ENCODE measurements at regions of chr5 and their contacts with region 1.

Region 1: GRCh38 chr5:141040771-141041426 is 10.3 kb upstream of the PCDHB1 start:
- DNase-seq: peak; percentile 85
- H3K4me3 ChIP-seq: no peak overlapping the region
- H3K27ac ChIP-seq: no peak overlapping the region
- H3K4me1 ChIP-seq: no peaks in the 10 kb centered on the region
- H3K27me3 ChIP-seq: no peaks in the 10 kb centered on the region
- CTCF ChIP-seq: peak; percentile 57
- POLR2A ChIP-seq: no peak

Region 2: DNA sequence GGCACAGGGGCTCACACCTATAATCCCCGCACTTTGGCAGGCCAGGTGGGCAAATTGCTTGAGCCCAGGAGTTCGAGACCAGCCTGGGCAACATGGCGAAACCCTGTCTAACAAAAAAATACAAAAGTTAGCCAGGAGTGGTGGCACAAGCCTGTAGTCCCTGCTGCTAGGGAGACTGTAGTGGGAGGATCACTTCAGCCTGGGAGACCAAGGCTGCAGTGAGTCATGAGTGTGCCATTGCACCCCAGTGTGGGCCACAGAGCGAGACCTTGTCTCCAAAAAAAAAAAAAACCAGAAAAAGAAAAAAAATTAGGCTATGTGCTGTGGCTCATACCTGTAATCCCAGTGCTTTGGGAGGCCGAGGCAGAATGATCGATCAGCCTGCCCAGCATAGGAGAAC is 552.0 kb before region 1 on chr5:
- CTCF ChIA-PET with region 1: no interaction called
- POLR2A ChIA-PET with region 1: no interaction called
- dilution Hi-C with region 1: no loop called
- intact Hi-C with region 1: no loop called
- DNase-seq: no peak
- H3K4me3 ChIP-seq: no peak overlapping the region
- H3K27ac ChIP-seq: no peak overlapping the region
- H3K4me1 ChIP-seq: no peaks in the 10 kb centered on the region
- H3K27me3 ChIP-seq: no peaks in the 10 kb centered on the region
- CTCF ChIP-seq: no peak
- POLR2A ChIP-seq: no peak

Region 3: DNA sequence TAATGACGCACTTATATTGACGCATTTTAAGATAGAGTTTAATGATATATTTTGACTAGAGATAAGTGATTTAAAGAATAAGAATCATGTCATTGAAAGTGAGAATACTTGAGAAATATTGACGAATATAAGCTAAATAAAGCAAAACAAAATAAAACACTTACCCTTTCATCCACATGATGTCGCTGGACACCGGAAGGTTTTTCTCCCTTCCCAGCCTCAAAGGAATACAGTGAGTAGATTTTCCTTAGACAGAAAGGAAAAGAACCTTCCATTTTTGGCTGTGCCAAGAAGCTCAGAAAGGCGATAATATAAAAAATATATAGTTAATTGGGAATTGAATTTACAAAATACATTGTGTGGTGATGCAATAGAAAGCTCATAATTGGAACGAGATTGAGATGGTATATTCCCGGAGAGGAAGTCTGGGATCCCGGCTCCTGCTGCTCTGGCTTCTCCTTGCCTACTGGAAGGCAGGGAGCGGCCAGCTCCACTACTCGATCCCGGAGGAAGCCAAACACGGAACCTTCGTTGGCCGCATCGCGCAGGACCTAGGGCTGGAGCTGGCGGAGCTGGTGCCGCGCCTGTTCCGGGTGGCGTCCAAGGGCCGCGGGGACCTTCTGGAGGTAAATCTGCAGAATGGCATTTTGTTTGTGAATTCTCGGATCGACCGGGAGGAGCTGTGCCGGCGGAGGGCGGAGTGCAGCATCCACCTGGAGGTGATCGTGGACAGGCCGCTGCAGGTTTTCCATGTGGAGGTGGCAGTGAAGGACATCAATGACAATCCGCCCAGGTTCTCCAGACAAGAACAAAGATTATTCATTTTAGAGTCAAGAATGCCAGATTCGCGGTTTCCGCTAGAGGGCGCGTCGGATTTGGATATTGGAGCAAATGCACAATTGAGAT is 219.3 kb before region 1 on chr5 and contains the start of gene PCDHA5:
- CTCF ChIA-PET with region 1: no interaction called
- POLR2A ChIA-PET with region 1: no interaction called
- dilution Hi-C with region 1: no loop called
- intact Hi-C with region 1: loop called (anchors 1 kb)
- DNase-seq: peak; percentile 38
- H3K4me3 ChIP-seq: no peak within 1 kb of the TSS
- H3K27ac ChIP-seq: no peak within 1 kb of the TSS
- H3K4me1 ChIP-seq: no peaks in the 10 kb centered on the region
- H3K27me3 ChIP-seq: no peaks in the 10 kb centered on the region
- CTCF ChIP-seq: peak; percentile 49 to 59
- POLR2A ChIP-seq: no peak
- total RNA-seq, gene PCDHA5: not detected in 2 replicates

Region 4: GRCh38 chr5:140840978-140841959 is 199.6 kb before region 1 on chr5 and contains the start of gene PCDHA8:
- CTCF ChIA-PET with region 1: interaction called, 9 read pairs
- POLR2A ChIA-PET with region 1: no interaction called
- dilution Hi-C with region 1: no loop called
- intact Hi-C with region 1: loop called (anchors 2 kb)
- DNase-seq: no peak
- H3K4me3 ChIP-seq: no peak within 1 kb of the TSS
- H3K27ac ChIP-seq: no peak within 1 kb of the TSS
- H3K4me1 ChIP-seq: no peaks in the 10 kb centered on the region
- H3K27me3 ChIP-seq: no peaks in the 10 kb centered on the region
- CTCF ChIP-seq: peak; percentile 22 to 29
- POLR2A ChIP-seq: no peak
- total RNA-seq, gene PCDHA8: not detected in 2 replicates

Region 5: DNA sequence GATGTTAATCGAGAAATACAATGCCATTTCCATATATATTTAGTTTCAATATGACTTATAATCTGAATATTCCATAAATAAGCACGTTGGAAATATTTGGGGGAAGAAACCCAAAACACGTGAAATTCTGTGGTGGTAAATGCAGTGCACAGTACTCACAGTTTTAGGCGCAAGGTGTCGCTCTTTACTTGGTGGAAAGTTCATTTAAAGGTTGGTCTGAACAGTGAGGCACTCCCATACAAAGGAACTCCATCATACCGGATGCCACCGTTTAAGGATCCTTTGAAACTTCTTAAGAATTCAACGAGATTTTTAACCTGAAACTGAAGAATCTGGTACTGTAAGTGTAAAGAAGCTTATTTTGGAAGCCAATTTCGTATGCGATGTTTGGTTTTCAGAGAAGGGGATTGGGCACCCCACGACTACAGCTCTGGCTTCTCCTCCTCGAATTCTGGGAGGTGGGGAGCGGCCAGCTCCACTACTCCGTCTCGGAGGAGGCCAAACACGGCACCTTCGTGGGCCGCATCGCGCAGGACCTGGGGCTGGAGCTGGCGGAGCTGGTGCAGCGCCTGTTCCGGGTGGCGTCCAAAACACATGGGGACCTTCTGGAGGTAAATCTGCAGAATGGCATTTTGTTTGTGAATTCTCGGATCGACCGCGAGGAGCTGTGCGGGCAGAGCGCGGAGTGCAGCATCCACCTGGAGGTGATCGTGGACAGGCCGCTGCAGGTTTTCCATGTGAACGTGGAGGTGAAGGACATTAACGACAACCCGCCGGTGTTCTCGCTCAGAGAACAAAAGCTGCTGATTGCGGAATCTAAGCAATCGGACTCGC is 172.0 kb before region 1 on chr5 and contains the start of gene PCDHA11:
- CTCF ChIA-PET with region 1: interaction called, 9 read pairs
- POLR2A ChIA-PET with region 1: no interaction called
- dilution Hi-C with region 1: no loop called
- intact Hi-C with region 1: loop called (anchors 1 kb)
- DNase-seq: peak; percentile 12
- H3K4me3 ChIP-seq: no peak within 1 kb of the TSS
- H3K27ac ChIP-seq: no peak within 1 kb of the TSS
- H3K4me1 ChIP-seq: no peaks in the 10 kb centered on the region
- H3K27me3 ChIP-seq: no peaks in the 10 kb centered on the region
- CTCF ChIP-seq: peak in 1 of 2 donors; percentile 9
- POLR2A ChIP-seq: no peak
- total RNA-seq, gene PCDHA11: 0.12 TPM in 1 of 2 replicates, not detected in the other

Region 6: GRCh38 chr5:140882591-140882899 is 158.4 kb before region 1 on chr5:
- CTCF ChIA-PET with region 1: interaction called, 12 read pairs
- POLR2A ChIA-PET with region 1: no interaction called
- dilution Hi-C with region 1: no loop called
- intact Hi-C with region 1: loop called (anchors 1 kb)
- DNase-seq: no peak
- H3K4me3 ChIP-seq: no peak overlapping the region
- H3K27ac ChIP-seq: no peak overlapping the region
- H3K4me1 ChIP-seq: no peaks in the 10 kb centered on the region
- H3K27me3 ChIP-seq: peaks cover 0 to 7% of the 10 kb centered on the region in 2 experiments
- CTCF ChIP-seq: no peak
- POLR2A ChIP-seq: no peak

Region 7: GRCh38 chr5:140926443-140927227 is 114.3 kb before region 1 on chr5:
- CTCF ChIA-PET with region 1: interaction called, 34 read pairs
- POLR2A ChIA-PET with region 1: no interaction called
- dilution Hi-C with region 1: no loop called
- intact Hi-C with region 1: loop called (anchors 1 kb)
- DNase-seq: peak; percentile 77
- H3K4me3 ChIP-seq: peak overlapping the region in 2 of 3 experiments; percentile 1 to 23
- H3K27ac ChIP-seq: no peak overlapping the region
- H3K4me1 ChIP-seq: peaks cover 2% of the 10 kb centered on the region
- H3K27me3 ChIP-seq: peaks cover 23 to 25% of the 10 kb centered on the region in 2 experiments
- CTCF ChIP-seq: peak; percentile 87 to 96
- POLR2A ChIP-seq: no peak

Region 8: GRCh38 chr5:140966293-140967225 is 74.3 kb before region 1 on chr5 and contains the start of gene PCDHAC2:
- CTCF ChIA-PET with region 1: interaction called, 5 read pairs
- POLR2A ChIA-PET with region 1: no interaction called
- dilution Hi-C with region 1: no loop called
- intact Hi-C with region 1: loop called (anchors 5 kb)
- DNase-seq: peak; percentile 62
- H3K4me3 ChIP-seq: peak within 1 kb of the TSS; percentile 31 to 61 (median 54)
- H3K27ac ChIP-seq: no peak within 1 kb of the TSS
- H3K4me1 ChIP-seq: peaks cover 4% of the 10 kb centered on the region
- H3K27me3 ChIP-seq: peaks cover 10 to 19% of the 10 kb centered on the region in 2 experiments
- CTCF ChIP-seq: no peak
- POLR2A ChIP-seq: no peak
- total RNA-seq, gene PCDHAC2: 0.90 and 1.00 TPM in 2 replicates

Measured in endothelial cell of umbilical vein (primary cell).